ENCODE measurements at regions of chr2 and their contacts with region 1.

Region 1: GRCh38 chr2:222690564-222691200 is 19.2 kb downstream of the MOGAT1 start:
- DNase-seq: peak; percentile 67 to 85
- ATAC-seq: peak; percentile 91 to 97 (median 94)
- H3K4me3 ChIP-seq: no peak overlapping the region
- H3K27ac ChIP-seq: no peak overlapping the region
- H3K4me1 ChIP-seq: no peaks in the 10 kb centered on the region
- H3K27me3 ChIP-seq: no peaks in the 10 kb centered on the region
- CTCF ChIP-seq: peak; percentile 95

Region 2: GRCh38 chr2:222860740-222861410 is 170.2 kb after region 1 on chr2 and contains the start of gene ACSL3:
- intact Hi-C with region 1: loop called in 1 of 2 experiments (anchors 1 kb)
- DNase-seq: peak; percentile 97 to 98
- ATAC-seq: peak; percentile 94 to 98 (median 96)
- H3K4me3 ChIP-seq: peak within 1 kb of the TSS; percentile 99
- H3K27ac ChIP-seq: peak within 1 kb of the TSS; percentile 99
- H3K4me1 ChIP-seq: peaks cover 45% of the 10 kb centered on the region
- H3K27me3 ChIP-seq: no peaks in the 10 kb centered on the region
- CTCF ChIP-seq: peak; percentile 12
- total RNA-seq, gene ACSL3: 25.3 to 136 (median 46.4) TPM

Region 3: GRCh38 chr2:222912117-222912516 is 221.4 kb after region 1 on chr2:
- intact Hi-C with region 1: loop called in 1 of 2 experiments (anchors 5 kb)
- DNase-seq: no peak
- ATAC-seq: peak; percentile 34 to 80 (median 76)
- H3K4me3 ChIP-seq: peak overlapping the region; percentile 31
- H3K27ac ChIP-seq: peak overlapping the region; percentile 47
- H3K4me1 ChIP-seq: peaks cover 31% of the 10 kb centered on the region
- H3K27me3 ChIP-seq: no peaks in the 10 kb centered on the region
- CTCF ChIP-seq: no peak

Region 4: GRCh38 chr2:222919841-222920526 is 229.3 kb after region 1 on chr2:
- intact Hi-C with region 1: loop called in 1 of 2 experiments (anchors 5 kb)
- DNase-seq: no peak
- ATAC-seq: peak; percentile 92 to 97 (median 94)
- H3K4me3 ChIP-seq: no peak overlapping the region
- H3K27ac ChIP-seq: peak overlapping the region; percentile 62
- H3K4me1 ChIP-seq: peaks cover 26% of the 10 kb centered on the region
- H3K27me3 ChIP-seq: no peaks in the 10 kb centered on the region
- CTCF ChIP-seq: no peak

Region 5: GRCh38 chr2:222939208-222939856 is 248.7 kb after region 1 on chr2:
- intact Hi-C with region 1: loop called in 1 of 2 experiments (anchors 5 kb)
- DNase-seq: no peak
- ATAC-seq: peak; percentile 62 to 91 (median 89)
- H3K4me3 ChIP-seq: no peak overlapping the region
- H3K27ac ChIP-seq: no peak overlapping the region
- H3K4me1 ChIP-seq: peaks cover 4% of the 10 kb centered on the region
- H3K27me3 ChIP-seq: no peaks in the 10 kb centered on the region
- CTCF ChIP-seq: peak; percentile 65